ENCODE measurements at regions of chr2 and their contacts with region 1.

Region 1: GRCh38 chr2:179422037-179422643 is 157.5 kb upstream of the SESTD1 start:
- DNase-seq: peak; percentile 76 to 90 (median 80)
- ATAC-seq: peak; percentile 75 to 77
- H3K4me3 ChIP-seq: peak overlapping the region; percentile 25
- H3K27ac ChIP-seq: no peak overlapping the region
- H3K4me1 ChIP-seq: no peaks in the 10 kb centered on the region
- H3K27me3 ChIP-seq: no peaks in the 10 kb centered on the region

Region 2: GRCh38 chr2:179751163-179751809 is 329.1 kb after region 1 on chr2:
- intact Hi-C with region 1: loop called (anchors 5 kb)
- DNase-seq: no peak
- ATAC-seq: no peak
- H3K4me3 ChIP-seq: no peak overlapping the region
- H3K27ac ChIP-seq: no peak overlapping the region
- H3K4me1 ChIP-seq: no peaks in the 10 kb centered on the region
- H3K27me3 ChIP-seq: no peaks in the 10 kb centered on the region

Region 3: DNA sequence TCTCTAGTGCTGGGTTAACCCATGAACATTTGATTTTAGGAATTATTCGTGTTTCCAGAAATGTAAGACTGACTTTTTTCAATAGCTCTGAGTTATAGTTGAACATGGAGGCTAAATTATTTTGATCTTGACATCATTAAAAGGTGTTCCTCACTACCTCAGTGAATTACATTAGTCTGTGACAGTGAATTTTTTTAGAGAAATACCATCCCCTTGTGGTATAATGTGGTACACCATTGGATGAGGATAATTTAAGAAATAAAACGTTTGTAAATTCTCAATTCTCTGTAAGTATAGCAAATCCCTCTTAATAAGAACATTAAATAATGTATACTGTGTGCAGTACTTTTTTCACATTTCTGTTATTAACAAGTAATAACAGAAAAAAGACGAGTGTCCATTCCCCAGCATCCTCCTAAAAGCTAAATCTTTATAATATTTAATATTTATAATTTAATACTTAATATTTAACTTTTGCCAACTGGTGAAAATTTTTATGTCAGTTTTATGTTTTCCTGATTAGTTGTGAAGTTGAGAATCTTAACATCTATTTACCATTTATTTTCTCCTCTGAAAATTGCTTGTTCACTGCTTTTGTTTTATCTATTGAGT is 655.3 kb after region 1 on chr2:
- intact Hi-C with region 1: loop called in 1 of 4 experiments (anchors 10 kb)
- DNase-seq: no peak
- ATAC-seq: no peak
- H3K4me3 ChIP-seq: no peak overlapping the region
- H3K27ac ChIP-seq: no peak overlapping the region
- H3K4me1 ChIP-seq: no peaks in the 10 kb centered on the region
- H3K27me3 ChIP-seq: no peaks in the 10 kb centered on the region